ENCODE measurements at regions of chr9 and their contacts with region 1.

Region 1: DNA sequence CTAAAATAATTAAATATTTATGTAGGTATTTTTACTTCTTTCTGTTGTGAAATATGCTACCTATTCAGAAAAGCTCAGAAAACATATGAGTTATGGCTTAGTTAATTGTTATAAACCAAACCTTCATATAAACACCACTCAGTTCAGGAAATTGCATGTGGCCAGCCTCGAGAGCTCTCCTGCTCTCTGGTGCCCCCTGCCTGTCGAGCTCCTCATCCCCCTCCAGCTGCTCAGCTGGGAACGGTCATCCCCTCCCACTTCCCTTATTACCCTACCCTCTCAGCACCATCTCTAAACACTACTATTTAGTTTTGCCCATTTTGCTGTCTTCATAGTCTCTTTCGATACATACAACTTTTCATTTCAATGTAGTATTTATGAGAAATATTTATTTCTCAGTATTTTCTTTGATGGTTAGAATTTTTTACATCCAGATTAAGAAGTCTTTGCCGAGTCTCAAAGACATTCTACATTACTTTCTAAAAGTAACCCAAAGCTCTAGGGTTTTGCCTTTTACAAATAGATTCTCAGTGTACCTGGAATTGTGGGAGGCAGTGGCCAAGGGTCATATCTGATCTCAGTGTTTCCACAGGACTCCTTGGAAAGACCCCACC is 51.2 kb upstream of the SEMA4D start:
- DNase-seq: peak; percentile 86
- H3K4me3 Mint-ChIP-seq: no peak overlapping the region
- H3K27ac Mint-ChIP-seq: peak overlapping the region; percentile 76
- H3K4me1 Mint-ChIP-seq: peaks cover 17% of the 10 kb centered on the region
- H3K27me3 Mint-ChIP-seq: peaks cover 3% of the 10 kb centered on the region

Region 2: DNA sequence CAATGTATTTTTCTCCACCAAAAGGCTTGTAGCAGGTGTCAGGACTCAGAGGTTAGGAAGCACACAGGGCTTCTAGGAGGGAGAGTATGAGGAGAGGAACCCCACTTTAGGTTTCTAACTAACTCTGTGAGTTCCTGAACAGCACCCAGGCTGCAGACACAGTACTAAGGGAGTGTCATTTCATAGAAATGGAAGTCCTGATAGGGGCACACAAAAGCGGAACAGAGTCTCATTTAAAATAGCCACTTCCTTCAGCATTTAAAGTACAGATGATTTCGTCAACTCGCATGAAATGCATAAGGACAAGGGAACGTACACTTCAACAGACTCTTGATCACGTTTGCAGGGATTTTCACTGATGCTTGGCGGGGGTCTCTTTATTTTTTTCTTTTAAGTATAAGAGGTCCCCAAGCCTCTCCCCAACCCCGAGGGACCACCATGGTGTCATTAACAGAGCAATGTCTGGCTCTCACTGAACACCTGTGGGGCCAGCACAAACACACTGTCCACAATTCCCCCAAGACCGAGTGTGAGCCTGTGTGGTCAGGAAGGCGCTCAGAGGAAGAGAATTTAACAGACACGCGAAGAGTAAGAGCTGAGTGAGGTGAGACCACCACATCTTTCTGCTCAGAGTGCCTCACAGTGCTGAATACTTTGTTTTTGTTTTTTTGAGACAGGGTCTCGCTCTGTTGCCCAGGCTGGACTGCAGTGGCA is 148.6 kb before region 1 on chr9:
- CTCF ChIA-PET with region 1: interaction called, 16 read pairs
- POLR2A ChIA-PET with region 1: no interaction called
- DNase-seq: no peak
- H3K4me3 Mint-ChIP-seq: no peak overlapping the region
- H3K27ac Mint-ChIP-seq: peak overlapping the region; percentile 48
- H3K4me1 Mint-ChIP-seq: peaks cover 25% of the 10 kb centered on the region
- H3K27me3 Mint-ChIP-seq: no peaks in the 10 kb centered on the region

Region 3: DNA sequence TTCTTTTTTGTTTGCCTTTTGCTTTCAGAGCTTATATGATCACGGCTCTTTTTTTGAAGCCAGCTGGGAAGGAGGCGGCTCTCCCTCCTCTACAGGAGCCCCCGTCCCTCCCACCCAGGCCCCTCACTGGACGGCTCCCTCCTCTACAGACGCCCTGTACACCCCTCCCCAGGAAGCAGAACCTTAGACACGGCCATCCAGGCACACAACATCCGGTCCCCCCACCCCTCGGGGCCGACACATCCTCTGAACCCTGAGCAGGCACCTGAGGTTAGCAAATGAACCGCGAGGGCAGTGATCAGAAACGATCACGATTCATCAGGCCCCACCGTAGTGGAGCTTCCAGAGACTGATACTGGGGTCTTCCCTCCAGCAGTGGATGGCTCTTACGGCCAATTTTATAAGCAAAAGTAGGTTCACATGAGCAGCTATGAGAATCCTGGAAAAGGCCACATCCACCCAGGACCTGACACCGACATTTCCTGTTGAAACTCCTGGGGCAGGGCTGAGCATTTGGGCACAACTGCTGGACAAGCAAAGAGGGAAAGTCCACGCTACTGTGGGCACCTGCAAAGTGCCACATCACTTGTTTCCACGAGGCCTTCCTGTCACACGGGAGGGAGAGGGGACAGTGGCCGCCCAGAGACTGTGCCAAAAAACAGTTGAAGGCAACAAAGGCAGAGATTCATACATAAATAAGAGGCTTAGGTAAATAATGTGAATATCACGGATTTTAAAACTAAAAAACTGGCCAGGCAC is 130.1 kb before region 1 on chr9:
- CTCF ChIA-PET with region 1: interaction called, 11 read pairs
- POLR2A ChIA-PET with region 1: interaction called, 3 read pairs
- DNase-seq: peak; percentile 83
- H3K4me3 Mint-ChIP-seq: peak overlapping the region; percentile 75
- H3K27ac Mint-ChIP-seq: peak overlapping the region; percentile 90
- H3K4me1 Mint-ChIP-seq: peaks cover 89% of the 10 kb centered on the region
- H3K27me3 Mint-ChIP-seq: no peaks in the 10 kb centered on the region

Region 4: DNA sequence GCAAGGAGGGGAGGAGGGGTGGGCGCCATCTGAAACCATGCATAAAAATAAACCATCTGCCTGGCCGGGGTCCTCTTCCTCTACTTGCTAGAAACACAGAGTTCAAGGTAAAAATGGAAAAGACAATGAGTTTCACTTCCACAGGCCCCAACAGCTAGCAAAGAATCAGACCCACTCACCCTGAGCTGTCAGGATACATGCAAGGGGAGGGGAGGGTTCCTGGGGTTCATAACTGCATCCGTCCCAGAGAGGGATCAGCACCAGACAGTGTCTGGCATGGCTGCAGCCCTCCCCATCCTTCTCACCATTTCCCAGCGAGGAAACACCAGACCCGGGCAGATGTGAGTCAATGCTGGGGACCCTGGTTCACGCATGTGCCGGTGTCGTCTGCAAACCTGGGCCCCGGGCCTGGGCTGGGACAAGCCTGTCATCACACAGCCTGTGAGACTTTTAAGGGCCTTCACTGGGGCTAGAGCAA is 106.6 kb before region 1 on chr9:
- CTCF ChIA-PET with region 1: interaction called, 13 read pairs
- POLR2A ChIA-PET with region 1: no interaction called
- DNase-seq: no peak
- H3K4me3 Mint-ChIP-seq: no peak overlapping the region
- H3K27ac Mint-ChIP-seq: peak overlapping the region; percentile 86
- H3K4me1 Mint-ChIP-seq: peaks cover 93% of the 10 kb centered on the region
- H3K27me3 Mint-ChIP-seq: no peaks in the 10 kb centered on the region

Region 5: GRCh38 chr9:89477811-89478630 is 71.1 kb before region 1 on chr9:
- CTCF ChIA-PET with region 1: interaction called, 10 read pairs
- POLR2A ChIA-PET with region 1: no interaction called
- DNase-seq: peak; percentile 67
- H3K4me3 Mint-ChIP-seq: peak overlapping the region; percentile 75
- H3K27ac Mint-ChIP-seq: peak overlapping the region; percentile 92
- H3K4me1 Mint-ChIP-seq: peaks cover 91% of the 10 kb centered on the region
- H3K27me3 Mint-ChIP-seq: no peaks in the 10 kb centered on the region

Region 6: DNA sequence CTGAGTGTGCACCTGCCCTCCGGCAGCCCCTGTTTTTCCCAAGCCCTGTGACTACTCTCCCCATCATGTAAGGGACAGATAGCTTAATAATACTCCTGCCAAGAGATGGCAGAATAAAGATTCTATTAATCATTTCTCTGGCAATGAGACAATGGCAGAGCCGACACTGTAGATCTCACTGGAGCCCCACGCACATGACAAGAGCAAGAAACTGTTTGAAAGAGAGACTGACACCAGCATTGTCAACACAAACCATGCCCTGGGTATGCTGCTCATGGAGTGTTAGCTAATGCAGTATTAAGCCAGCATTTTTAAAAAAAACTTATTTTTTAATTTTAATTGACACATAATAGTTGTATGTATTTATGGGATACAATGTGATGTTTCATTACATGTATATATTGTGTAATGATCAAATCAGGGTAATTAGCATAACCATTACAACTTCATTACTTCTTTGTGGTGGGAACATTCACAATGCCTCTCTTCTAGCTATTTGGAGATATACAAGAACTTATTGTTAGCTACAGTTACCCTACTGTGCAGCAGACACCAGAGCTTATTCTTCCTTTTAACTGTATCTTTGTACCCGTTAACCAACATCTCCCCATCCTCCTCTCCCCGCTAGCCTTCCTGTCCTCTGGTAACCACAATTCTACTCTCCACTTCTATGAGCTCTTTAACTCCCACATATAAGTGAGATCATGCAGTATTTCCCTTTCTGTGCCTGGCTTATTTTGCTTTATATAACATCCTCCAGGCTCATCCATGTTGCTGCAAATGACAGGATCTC is 19.7 kb before region 1 on chr9:
- CTCF ChIA-PET with region 1: interaction called, 25 read pairs
- POLR2A ChIA-PET with region 1: no interaction called
- DNase-seq: peak; percentile 53
- H3K4me3 Mint-ChIP-seq: peak overlapping the region; percentile 27
- H3K27ac Mint-ChIP-seq: peak overlapping the region; percentile 72
- H3K4me1 Mint-ChIP-seq: peaks cover 97% of the 10 kb centered on the region
- H3K27me3 Mint-ChIP-seq: no peaks in the 10 kb centered on the region